ENCODE measurements at regions of chr20 and their contacts with region 1.

Region 1: GRCh38 chr20:22691369-22692118 is 107.2 kb upstream of the FOXA2 start:
- DNase-seq: peak; percentile 51 to 97 (median 78)

Region 2: GRCh38 chr20:23043376-23043775 is 351.8 kb after region 1 on chr20:
- intact Hi-C with region 1: loop called (anchors 5 kb)
- DNase-seq: no peak

Region 3: DNA sequence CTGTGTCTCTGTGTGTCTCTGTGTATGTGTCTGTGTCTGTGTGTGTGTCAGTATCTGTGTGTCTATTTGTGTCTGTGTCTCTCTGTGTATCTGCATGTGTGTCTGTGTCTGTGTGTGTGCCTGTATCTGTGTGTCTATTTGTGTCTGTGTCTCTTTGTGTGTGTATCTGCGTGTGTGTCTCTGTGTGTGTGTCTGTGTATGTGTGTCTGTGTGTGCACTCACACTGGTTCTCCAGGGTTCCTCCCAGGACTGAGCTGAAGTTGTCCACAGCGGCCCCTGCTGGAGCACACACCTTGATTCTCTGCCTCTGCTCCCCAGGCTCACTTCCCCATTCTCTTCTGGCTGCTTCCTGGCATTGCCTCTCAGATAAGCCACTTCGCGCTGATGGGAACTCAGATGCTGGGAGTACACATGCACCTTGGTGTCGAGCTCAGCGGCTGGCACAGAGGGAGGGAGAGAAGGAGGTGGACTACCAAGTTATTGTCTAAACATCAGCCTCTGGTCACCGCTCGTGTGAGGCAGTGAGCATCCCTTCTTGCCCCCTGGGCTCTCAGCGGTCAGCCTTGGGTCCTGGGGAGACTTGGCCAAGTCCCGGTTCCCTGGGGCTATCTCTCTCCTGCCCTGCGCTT is 554.1 kb after region 1 on chr20:
- intact Hi-C with region 1: loop called (anchors 5 kb)
- DNase-seq: peak in 5 of 10 donors; percentile 19 to 90 (median 34)

Region 4: GRCh38 chr20:23340524-23340923 is 649.0 kb after region 1 on chr20:
- intact Hi-C with region 1: loop called (anchors 1 kb)
- DNase-seq: peak; percentile 33 to 94 (median 75)

Region 5: DNA sequence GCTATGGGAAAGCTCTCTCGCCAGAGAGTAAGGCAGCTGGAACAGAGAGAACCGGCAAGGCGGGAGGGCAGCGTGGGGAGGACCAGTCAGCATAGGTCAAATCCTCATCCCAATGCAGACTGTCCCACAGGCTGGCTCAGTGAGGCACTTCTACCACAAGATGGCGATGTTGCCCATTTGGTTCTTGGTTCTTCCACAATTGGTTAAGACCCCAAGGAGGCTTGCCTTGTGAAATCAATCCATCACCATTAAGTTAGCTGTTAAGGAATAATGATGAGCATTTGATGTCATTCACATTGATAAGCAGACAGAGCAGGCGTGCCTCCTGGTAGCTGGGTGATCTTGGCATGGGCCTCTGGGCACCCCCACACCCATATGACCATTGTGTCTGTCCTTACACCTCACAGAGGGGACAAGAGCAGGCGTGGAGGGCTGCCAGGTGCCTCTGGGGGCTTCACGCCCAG is 750.3 kb after region 1 on chr20:
- intact Hi-C with region 1: loop called (anchors 5 kb)
- DNase-seq: peak in 8 of 10 donors; percentile 32 to 95 (median 76)